A673 (cell line): ENCODE measurements at regions of chr1 and their contacts with region 1.

Region 1: GRCh38 chr1:87084244-87084836 is 169.9 kb downstream of the HS2ST1 start:
- DNase-seq: peak; percentile 58
- H3K4me3 ChIP-seq: no peak overlapping the region
- H3K27ac ChIP-seq: no peak overlapping the region
- H3K4me1 ChIP-seq: no peaks in the 10 kb centered on the region
- H3K27me3 ChIP-seq: no peaks in the 10 kb centered on the region
- CTCF ChIP-seq: peak; percentile 65

Region 2: GRCh38 chr1:86704458-86704971 is 379.8 kb before region 1 on chr1 and contains the start of gene SH3GLB1:
- CTCF ChIA-PET with region 1: no interaction called
- POLR2A ChIA-PET with region 1: no interaction called
- intact Hi-C with region 1: loop called (anchors 2 kb)
- DNase-seq: peak; percentile 89
- H3K4me3 ChIP-seq: peak within 1 kb of the TSS; percentile 98
- H3K27ac ChIP-seq: peak within 1 kb of the TSS; percentile 86
- H3K4me1 ChIP-seq: peaks cover 14% of the 10 kb centered on the region
- H3K27me3 ChIP-seq: no peaks in the 10 kb centered on the region
- CTCF ChIP-seq: peak; percentile 95
- total RNA-seq, gene SH3GLB1: 43.4 and 45.9 TPM in 2 replicates

Region 3: GRCh38 chr1:86965012-86965826 is 119.1 kb before region 1 on chr1:
- CTCF ChIA-PET with region 1: no interaction called
- POLR2A ChIA-PET with region 1: no interaction called
- intact Hi-C with region 1: loop called (anchors 5 kb)
- DNase-seq: peak; percentile 68
- H3K4me3 ChIP-seq: no peak overlapping the region
- H3K27ac ChIP-seq: no peak overlapping the region
- H3K4me1 ChIP-seq: no peaks in the 10 kb centered on the region
- H3K27me3 ChIP-seq: no peaks in the 10 kb centered on the region
- CTCF ChIP-seq: peak; percentile 79

Region 4: GRCh38 chr1:87279966-87280535 is 195.7 kb after region 1 on chr1:
- CTCF ChIA-PET with region 1: no interaction called
- POLR2A ChIA-PET with region 1: no interaction called
- intact Hi-C with region 1: no loop called
- DNase-seq: peak; percentile 52
- H3K4me3 ChIP-seq: no peak overlapping the region
- H3K27ac ChIP-seq: no peak overlapping the region
- H3K4me1 ChIP-seq: peaks cover 9% of the 10 kb centered on the region
- H3K27me3 ChIP-seq: no peaks in the 10 kb centered on the region
- CTCF ChIP-seq: peak; percentile 48